ENCODE measurements at regions of chr10 and their contacts with region 1.

Region 1: GRCh38 chr10:51001587-51001986 is 72.7 kb upstream of the PRKG1 start:
- DNase-seq: peak; percentile 36
- H3K4me3 ChIP-seq: no peak overlapping the region
- H3K27ac ChIP-seq: no peak overlapping the region
- H3K4me1 ChIP-seq: no peaks in the 10 kb centered on the region
- H3K27me3 ChIP-seq: peaks cover 0 to 15% of the 10 kb centered on the region in 2 experiments
- CTCF ChIP-seq: peak; percentile 17 to 40
- POLR2A ChIP-seq: no peak

Region 2: GRCh38 chr10:51047857-51048256 is 46.3 kb after region 1 on chr10:
- CTCF ChIA-PET with region 1: no interaction called
- POLR2A ChIA-PET with region 1: no interaction called
- dilution Hi-C with region 1: no loop called
- intact Hi-C with region 1: no loop called
- DNase-seq: no peak
- H3K4me3 ChIP-seq: no peak overlapping the region
- H3K27ac ChIP-seq: no peak overlapping the region
- H3K4me1 ChIP-seq: no peaks in the 10 kb centered on the region
- H3K27me3 ChIP-seq: peaks cover 1 to 2% of the 10 kb centered on the region in 2 experiments
- CTCF ChIP-seq: no peak
- POLR2A ChIP-seq: no peak

Region 3: DNA sequence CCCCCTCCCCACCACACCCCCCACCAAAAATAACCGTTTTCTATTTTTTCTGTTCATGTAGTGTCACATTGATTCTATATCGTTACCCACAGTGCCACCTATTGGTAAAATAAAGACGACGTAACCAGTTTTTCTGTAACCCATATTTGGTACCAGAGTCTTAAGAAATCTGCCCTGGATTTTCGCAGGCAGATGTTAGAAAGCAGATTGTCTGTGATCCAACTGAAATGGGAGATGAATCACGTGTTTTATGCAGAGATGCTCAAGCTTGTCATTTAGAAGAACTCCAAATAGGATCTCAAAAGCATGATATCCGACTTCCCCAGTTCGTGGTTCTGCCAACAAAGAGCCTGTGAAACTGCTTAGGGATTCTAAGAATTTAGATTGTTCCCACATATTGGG is 958.9 kb after region 1 on chr10:
- CTCF ChIA-PET with region 1: interaction called, 3 read pairs
- POLR2A ChIA-PET with region 1: no interaction called
- dilution Hi-C with region 1: no loop called
- intact Hi-C with region 1: loop called (anchors 2 kb)
- DNase-seq: peak; percentile 52
- H3K4me3 ChIP-seq: no peak overlapping the region
- H3K27ac ChIP-seq: no peak overlapping the region
- H3K4me1 ChIP-seq: no peaks in the 10 kb centered on the region
- H3K27me3 ChIP-seq: no peaks in the 10 kb centered on the region
- CTCF ChIP-seq: peak; percentile 33 to 34
- POLR2A ChIP-seq: no peak

Region 4: GRCh38 chr10:52004342-52004949 is 1002.9 kb after region 1 on chr10:
- CTCF ChIA-PET with region 1: interaction called, 6 read pairs
- POLR2A ChIA-PET with region 1: no interaction called
- dilution Hi-C with region 1: no loop called
- intact Hi-C with region 1: loop called (anchors 5 kb)
- DNase-seq: peak; percentile 62
- H3K4me3 ChIP-seq: no peak overlapping the region
- H3K27ac ChIP-seq: no peak overlapping the region
- H3K4me1 ChIP-seq: no peaks in the 10 kb centered on the region
- H3K27me3 ChIP-seq: peaks cover 3 to 14% of the 10 kb centered on the region in 2 experiments
- CTCF ChIP-seq: peak; percentile 28 to 45
- POLR2A ChIP-seq: no peak